Breast epithelium (tissue), 4 donors: ENCODE measurements at regions of chr17 and their contacts with region 1.

Region 1: GRCh38 chr17:44218344-44219107 is 949 bp downstream of the UBTF start:
- DNase-seq: peak; percentile 80 to 84
- H3K4me3 ChIP-seq: peak overlapping the region; percentile 72 to 79 (median 73)
- H3K27ac ChIP-seq: peak overlapping the region; percentile 97 to 98
- H3K4me1 ChIP-seq: peaks cover 0 to 21% of the 10 kb centered on the region in 2 donors
- H3K27me3 ChIP-seq: no peaks in the 10 kb centered on the region
- CTCF ChIP-seq: peak; percentile 12 to 43 (median 34)
- POLR2A ChIP-seq: no peak

Region 2: GRCh38 chr17:42221937-42222745 is 1996.4 kb before region 1 on chr17:
- intact Hi-C with region 1: loop called (anchors 5 kb)
- DNase-seq: no peak
- H3K4me3 ChIP-seq: no peak overlapping the region
- H3K27ac ChIP-seq: no peak overlapping the region
- H3K4me1 ChIP-seq: no peaks in the 10 kb centered on the region
- H3K27me3 ChIP-seq: no peaks in the 10 kb centered on the region
- CTCF ChIP-seq: peak in 2 of 3 donors; percentile 36 to 48
- POLR2A ChIP-seq: no peak